ENCODE measurements at regions of chr11 and their contacts with region 1.

Region 1: DNA sequence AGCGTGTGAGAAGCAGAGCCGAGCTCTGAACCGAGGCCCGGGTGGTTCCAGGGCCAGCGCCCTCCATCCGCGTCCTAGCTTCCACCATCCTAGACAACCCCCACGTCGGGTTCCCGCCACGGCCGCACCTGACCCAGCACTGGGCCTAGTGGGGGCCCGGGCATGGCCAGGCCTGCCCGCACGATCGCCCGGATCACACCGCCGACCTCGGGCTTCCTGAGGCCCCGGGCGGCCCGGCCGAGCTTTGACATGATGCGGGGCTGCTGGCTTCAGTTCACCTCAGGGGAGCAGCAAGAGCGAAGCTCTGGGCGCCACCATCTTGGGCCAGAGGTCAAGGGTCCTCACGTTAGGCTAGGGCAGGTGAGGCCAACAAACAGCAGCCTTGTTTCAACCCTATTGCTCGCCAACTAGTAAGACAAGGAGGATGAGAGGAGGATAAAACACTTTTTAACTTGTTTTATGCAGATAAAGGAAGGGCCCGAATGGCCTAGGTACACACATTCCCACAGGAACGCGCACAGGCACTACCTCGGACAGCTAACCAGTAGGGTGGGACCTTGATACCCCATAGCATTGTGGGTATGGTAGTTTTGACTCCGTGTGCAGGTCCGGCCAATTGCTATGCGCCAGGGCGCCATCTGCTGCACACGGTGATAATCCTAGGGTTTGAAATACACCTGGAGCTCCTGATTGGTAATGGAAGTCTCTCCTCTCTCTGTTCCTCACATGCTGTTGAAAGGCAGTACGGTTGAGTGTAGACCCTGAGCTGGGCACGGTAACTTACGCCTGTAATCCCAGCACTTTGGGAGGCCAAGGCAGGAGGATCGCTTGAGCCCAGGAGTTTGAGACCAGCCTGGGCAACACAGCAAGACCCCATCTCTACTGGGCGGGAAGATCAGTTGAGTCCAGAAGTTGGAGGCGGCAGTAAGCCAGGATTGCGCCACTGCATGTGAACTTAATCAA is at the start of gene MRPL11:
- DNase-seq: peak; percentile 74 to 93 (median 90)
- ATAC-seq: peak; percentile 100
- H3K4me3 ChIP-seq: peak within 1 kb of the TSS; percentile 86
- H3K4me3 Mint-ChIP-seq: peak within 1 kb of the TSS; percentile 83 to 96 (median 90)
- H3K27ac ChIP-seq: peak within 1 kb of the TSS; percentile 84
- H3K27ac Mint-ChIP-seq: peak within 1 kb of the TSS; percentile 84 to 99 (median 94)
- H3K4me1 ChIP-seq: peaks cover 4 to 5% of the 10 kb centered on the region in 2 donors
- H3K4me1 Mint-ChIP-seq: peaks cover 7 to 13% (median 11%) of the 10 kb centered on the region in 7 donors
- H3K27me3 ChIP-seq: no peaks in the 10 kb centered on the region
- H3K27me3 Mint-ChIP-seq: peaks cover 0 to 7% (median 0%) of the 10 kb centered on the region in 5 donors
- total RNA-seq, gene MRPL11: 23.5 to 64.1 (median 24.0) TPM

Region 2: GRCh38 chr11:66371627-66372415 is 67.0 kb before region 1 on chr11 and contains the start of gene SLC29A2:
- CTCF ChIA-PET with region 1: no interaction called
- POLR2A ChIA-PET with region 1: interaction called, 3 read pairs
- intact Hi-C with region 1: loop called (anchors 2 kb)
- DNase-seq: peak; percentile 53 to 85 (median 80)
- ATAC-seq: peak; percentile 89
- H3K4me3 ChIP-seq: peak within 1 kb of the TSS; percentile 72
- H3K4me3 Mint-ChIP-seq: peak within 1 kb of the TSS; percentile 81 to 96 (median 88)
- H3K27ac ChIP-seq: peak within 1 kb of the TSS; percentile 83
- H3K27ac Mint-ChIP-seq: peak within 1 kb of the TSS; percentile 79 to 95 (median 90)
- H3K4me1 ChIP-seq: peaks cover 4 to 8% of the 10 kb centered on the region in 2 donors
- H3K4me1 Mint-ChIP-seq: peaks cover 0 to 24% (median 13%) of the 10 kb centered on the region in 7 donors
- H3K27me3 ChIP-seq: no peaks in the 10 kb centered on the region
- H3K27me3 Mint-ChIP-seq: peaks cover 0 to 3% (median 0%) of the 10 kb centered on the region in 5 donors
- total RNA-seq, gene SLC29A2: 6.0 to 18.9 (median 12.0) TPM

Region 3: DNA sequence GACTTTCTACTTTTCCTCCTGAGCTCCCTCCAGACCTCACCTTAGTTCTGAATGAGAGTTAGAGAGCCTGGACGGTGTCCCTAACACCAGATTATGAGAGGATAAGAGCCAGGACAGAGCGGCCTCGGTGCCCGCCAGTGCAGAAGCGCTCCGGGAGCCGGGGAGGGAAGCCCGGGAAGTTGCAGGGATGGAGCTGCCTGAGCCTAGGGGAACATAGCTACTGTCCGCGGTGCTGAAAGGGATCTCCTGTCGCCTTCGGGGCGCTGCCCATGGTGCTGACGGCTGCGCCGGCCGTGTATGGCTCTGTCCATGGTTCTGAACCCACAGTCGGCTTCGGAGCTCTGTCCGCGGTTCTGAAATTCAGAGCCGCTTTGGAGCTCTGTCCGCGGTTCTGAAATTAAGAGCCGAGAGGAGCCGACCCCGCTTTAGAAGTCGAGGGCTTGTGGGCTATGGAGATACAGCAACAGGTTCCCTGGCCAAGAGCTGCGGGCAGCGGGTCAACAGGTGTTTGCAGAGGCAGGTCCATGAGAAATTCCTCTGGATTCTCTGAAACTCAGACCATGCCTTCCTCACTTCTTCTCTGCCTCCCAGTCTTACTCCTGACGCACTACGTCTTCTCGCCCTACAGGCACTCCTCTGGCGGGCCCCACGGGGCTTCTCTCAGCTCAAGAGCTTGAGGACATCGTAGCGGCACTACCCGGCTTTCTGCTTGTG is 17.1 kb before region 1 on chr11:
- CTCF ChIA-PET with region 1: interaction called, 4 read pairs
- POLR2A ChIA-PET with region 1: interaction called, 9 read pairs
- intact Hi-C with region 1: loop called (anchors 1 kb)
- DNase-seq: peak; percentile 79 to 94 (median 86)
- ATAC-seq: peak; percentile 100
- H3K4me3 ChIP-seq: no peak overlapping the region
- H3K4me3 Mint-ChIP-seq: peak overlapping the region in 4 of 10 donors; percentile 20 to 73 (median 41)
- H3K27ac ChIP-seq: no peak overlapping the region
- H3K27ac Mint-ChIP-seq: peak overlapping the region in 6 of 9 donors; percentile 31 to 85 (median 58)
- H3K4me1 ChIP-seq: no peaks in the 10 kb centered on the region
- H3K4me1 Mint-ChIP-seq: peaks cover 9 to 22% (median 10%) of the 10 kb centered on the region in 7 donors
- H3K27me3 ChIP-seq: peaks cover 7 to 22% of the 10 kb centered on the region in 2 donors
- H3K27me3 Mint-ChIP-seq: peaks cover 23 to 29% (median 29%) of the 10 kb centered on the region in 5 donors

Region 4: DNA sequence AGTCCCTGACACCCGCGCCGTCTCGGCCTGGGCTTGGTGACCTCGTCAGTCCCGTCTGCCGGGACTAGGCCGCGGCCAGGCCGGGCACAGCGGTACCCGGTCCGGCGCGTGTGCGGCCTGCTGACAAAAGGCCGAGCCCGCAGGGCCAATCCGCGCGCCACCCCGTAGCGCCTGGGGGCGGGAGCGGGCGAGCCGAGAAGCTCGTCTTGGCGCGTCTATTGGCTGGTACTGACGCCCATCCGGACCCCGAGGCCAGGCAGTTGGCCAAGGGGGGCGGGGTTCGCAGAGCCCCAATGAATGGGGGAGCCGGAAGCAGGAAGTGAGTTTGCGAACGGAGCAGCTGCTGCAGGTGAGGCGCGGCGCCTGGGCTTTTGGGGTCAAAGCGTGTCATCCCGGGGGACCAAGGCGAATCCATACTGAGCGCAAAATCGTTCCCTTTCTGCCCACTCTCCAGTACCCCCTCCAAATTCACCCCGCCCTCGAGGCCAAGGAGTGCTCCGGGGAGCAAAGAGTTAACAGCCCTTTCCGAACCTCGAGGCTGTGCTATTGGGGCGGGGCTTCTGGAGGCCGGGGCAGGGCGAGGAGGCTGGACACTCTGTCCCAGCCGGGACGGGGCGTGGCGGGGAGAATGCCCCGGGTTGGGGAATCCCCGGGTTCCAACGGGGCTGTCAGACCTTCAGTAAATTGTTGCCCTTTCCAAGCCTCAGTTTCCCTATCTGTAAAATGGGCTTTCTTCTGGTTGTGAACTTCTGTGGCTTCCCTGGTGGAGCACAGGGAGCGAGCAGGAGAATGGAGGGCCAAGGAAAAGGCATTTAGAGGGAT is 41.5 kb after region 1 on chr11 and contains the start of gene DPP3:
- CTCF ChIA-PET with region 1: interaction called, 12 read pairs
- POLR2A ChIA-PET with region 1: interaction called, 6 read pairs
- intact Hi-C with region 1: loop called (anchors 1 kb)
- DNase-seq: peak; percentile 87 to 97 (median 95)
- ATAC-seq: peak; percentile 99
- H3K4me3 ChIP-seq: peak within 1 kb of the TSS; percentile 86
- H3K4me3 Mint-ChIP-seq: peak within 1 kb of the TSS; percentile 86 to 92 (median 90)
- H3K27ac ChIP-seq: peak within 1 kb of the TSS; percentile 90
- H3K27ac Mint-ChIP-seq: peak within 1 kb of the TSS; percentile 75 to 91 (median 90)
- H3K4me1 ChIP-seq: peaks cover 9 to 14% of the 10 kb centered on the region in 2 donors
- H3K4me1 Mint-ChIP-seq: peaks cover 9 to 37% (median 17%) of the 10 kb centered on the region in 7 donors
- H3K27me3 ChIP-seq: no peaks in the 10 kb centered on the region
- H3K27me3 Mint-ChIP-seq: no peaks in the 10 kb centered on the region
- total RNA-seq, gene DPP3: 15.8 to 75.7 (median 19.4) TPM

Region 5: DNA sequence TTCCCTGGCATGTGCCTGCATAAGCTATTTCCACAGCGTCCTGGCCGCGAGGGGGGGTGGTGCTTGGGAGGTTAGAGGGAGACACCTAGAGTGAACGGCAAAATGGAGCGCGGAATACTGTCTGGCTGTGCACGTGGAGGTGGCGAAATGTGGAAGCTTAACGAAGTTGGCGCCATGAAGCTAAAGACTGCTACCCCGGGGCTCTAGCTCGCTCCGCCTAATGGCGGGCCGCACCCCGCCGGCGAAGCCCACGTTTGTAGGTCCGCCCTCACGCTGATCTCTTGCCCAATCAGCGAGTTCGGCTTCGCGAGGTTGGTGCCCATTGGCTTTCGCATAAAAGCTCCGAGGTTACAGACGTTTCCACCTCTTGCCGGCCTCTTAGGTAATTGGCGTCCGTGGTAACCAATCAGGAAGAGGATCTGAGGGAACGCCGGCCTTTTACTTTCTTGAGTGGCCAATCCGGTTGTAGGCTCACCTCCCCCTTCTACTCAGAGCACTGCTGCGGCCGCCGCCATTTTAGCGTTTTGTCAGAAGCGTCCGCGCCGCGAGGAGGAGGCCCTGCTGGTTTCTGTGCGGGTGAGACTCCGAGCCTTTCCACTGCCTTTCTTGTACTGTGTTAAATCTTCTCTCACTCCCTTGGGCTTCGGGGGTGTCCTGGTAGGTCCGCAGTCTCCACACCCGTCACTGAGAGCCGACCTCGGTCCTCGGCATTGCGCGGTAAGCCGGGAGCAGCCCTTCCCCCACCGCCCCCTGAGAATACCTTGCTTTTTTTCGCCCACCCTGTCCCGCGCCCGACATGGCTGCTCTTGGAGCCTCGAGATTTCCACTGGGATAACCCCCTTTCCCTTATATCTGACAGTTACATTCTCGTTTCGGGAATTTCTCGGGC is 199.6 kb after region 1 on chr11 and contains the start of gene RBM4:
- CTCF ChIA-PET with region 1: no interaction called
- POLR2A ChIA-PET with region 1: no interaction called
- intact Hi-C with region 1: no loop called
- DNase-seq: peak; percentile 80 to 99 (median 98)
- ATAC-seq: peak; percentile 93
- H3K4me3 ChIP-seq: peak within 1 kb of the TSS; percentile 91
- H3K4me3 Mint-ChIP-seq: peak within 1 kb of the TSS; percentile 92 to 100 (median 94)
- H3K27ac ChIP-seq: peak within 1 kb of the TSS; percentile 93
- H3K27ac Mint-ChIP-seq: peak within 1 kb of the TSS; percentile 87 to 98 (median 96)
- H3K4me1 ChIP-seq: peaks cover 44 to 48% of the 10 kb centered on the region in 2 donors
- H3K4me1 Mint-ChIP-seq: peaks cover 45 to 73% (median 68%) of the 10 kb centered on the region in 7 donors
- H3K27me3 ChIP-seq: no peaks in the 10 kb centered on the region
- H3K27me3 Mint-ChIP-seq: no peaks in the 10 kb centered on the region
- total RNA-seq, gene RBM4: 139 to 239 (median 198) TPM

Region 6: GRCh38 chr11:66677599-66678375 is 239.0 kb after region 1 on chr11 and contains the start of gene RBM4B:
- CTCF ChIA-PET with region 1: interaction called, 10 read pairs
- POLR2A ChIA-PET with region 1: interaction called, 12 read pairs
- intact Hi-C with region 1: loop called (anchors 1 to 2 kb)
- DNase-seq: peak; percentile 89 to 96 (median 94)
- ATAC-seq: peak; percentile 94
- H3K4me3 ChIP-seq: peak within 1 kb of the TSS; percentile 100
- H3K4me3 Mint-ChIP-seq: peak within 1 kb of the TSS; percentile 87 to 98 (median 96)
- H3K27ac ChIP-seq: peak within 1 kb of the TSS; percentile 95
- H3K27ac Mint-ChIP-seq: peak within 1 kb of the TSS; percentile 94 to 100 (median 99)
- H3K4me1 ChIP-seq: peaks cover 23 to 31% of the 10 kb centered on the region in 2 donors
- H3K4me1 Mint-ChIP-seq: peaks cover 21 to 49% (median 37%) of the 10 kb centered on the region in 7 donors
- H3K27me3 ChIP-seq: no peaks in the 10 kb centered on the region
- H3K27me3 Mint-ChIP-seq: no peaks in the 10 kb centered on the region
- total RNA-seq, gene RBM4B: 9.8 to 27.2 (median 19.7) TPM

Measured in naive thymus-derived CD4-positive, alpha-beta T cell (primary cell).